ENCODE measurements at regions of chr12 and their contacts with region 1.

Region 1: DNA sequence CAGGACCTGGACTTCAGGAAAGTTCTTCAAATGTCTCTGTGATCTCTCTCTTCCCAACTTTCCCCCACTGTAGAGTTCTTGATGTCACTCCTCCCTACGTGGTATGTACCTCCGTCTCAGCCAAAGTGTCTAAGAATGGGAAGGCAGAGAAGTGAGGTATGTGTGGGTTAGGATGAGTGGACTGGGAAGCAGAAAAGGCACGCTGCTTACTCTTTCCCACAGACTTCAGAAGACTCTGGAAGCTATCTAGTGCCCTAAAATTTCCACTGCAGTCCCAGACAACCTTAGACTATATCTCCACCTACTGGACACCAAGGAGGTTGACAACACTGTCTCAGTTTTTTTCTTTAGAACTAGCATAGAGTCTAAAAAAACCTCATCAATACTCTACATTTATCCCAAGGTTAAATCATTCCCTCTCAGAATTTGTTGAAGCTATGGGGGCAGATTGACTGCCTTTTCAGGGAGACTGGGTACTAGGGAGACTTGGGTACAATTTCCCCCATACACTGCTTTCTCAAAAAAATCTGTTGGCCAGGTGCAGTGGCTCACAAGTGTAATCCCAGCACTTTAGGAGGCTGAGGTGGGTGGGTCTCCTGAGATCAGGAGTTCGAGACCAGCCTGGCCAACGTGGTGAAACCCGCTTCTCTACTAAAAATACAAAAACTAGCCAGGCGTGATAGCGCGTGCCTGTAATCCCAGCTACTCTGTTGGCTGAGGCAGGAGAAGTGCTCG is 20.6 kb upstream of the ITGA5 start:
- DNase-seq: no peak
- ATAC-seq: peak; percentile 72
- H3K4me3 ChIP-seq: no peak overlapping the region
- H3K27ac ChIP-seq: no peak overlapping the region
- H3K4me1 ChIP-seq: 0 out of 2 replicates have a peak, but pooled peaks cover 7% of the 10 kb centered on the region
- H3K27me3 ChIP-seq: no peaks in the 10 kb centered on the region; a peak in 1 of 4 replicates
- CTCF ChIP-seq: peak; percentile 76 to 85 (median 77)
- EP300 ChIP-seq: no peak
- POLR2A ChIP-seq: no peak
- RAD21 ChIP-seq: peak; percentile 92

Region 2: DNA sequence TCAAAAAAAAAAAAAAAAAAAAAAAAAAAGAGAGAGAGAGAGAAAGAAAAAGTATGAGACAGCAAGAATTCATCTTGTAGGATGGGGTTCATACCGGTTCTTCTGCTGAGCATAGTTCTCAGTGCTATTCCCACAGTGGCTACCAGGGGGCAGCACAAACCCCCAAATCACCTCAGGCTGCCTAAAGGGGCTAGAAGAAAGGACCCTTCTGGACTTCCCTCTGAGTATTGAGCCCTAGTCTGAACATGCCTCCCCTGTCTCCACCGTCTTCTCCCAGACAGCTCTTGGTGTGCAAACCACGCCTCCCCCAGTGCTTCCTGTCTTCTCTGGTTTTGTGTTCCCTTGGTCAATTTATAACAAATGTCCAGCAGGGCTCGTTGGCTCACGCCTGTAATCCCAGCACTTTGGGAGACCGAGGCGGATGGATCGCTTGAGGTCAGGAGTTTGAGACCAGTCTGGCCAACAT is 219.6 kb before region 1 on chr12:
- CTCF ChIA-PET with region 1: interaction called, 10 read pairs
- POLR2A ChIA-PET with region 1: no interaction called
- RAD21 ChIA-PET with region 1: no interaction called
- SMC1A ChIA-PET with region 1: interaction called, 3 read pairs
- in situ Hi-C with region 1: no loop called
- intact Hi-C with region 1: no loop called
- DNase-seq: no peak
- ATAC-seq: peak; percentile 58
- H3K4me3 ChIP-seq: no peak overlapping the region
- H3K27ac ChIP-seq: no peak overlapping the region
- H3K4me1 ChIP-seq: peaks cover 30% of the 10 kb centered on the region
- H3K27me3 ChIP-seq: peaks cover 0 to 1% of the 10 kb centered on the region in 2 experiments; a peak in 1 of 4 replicates
- CTCF ChIP-seq: peak; percentile 84 to 90 (median 90)
- EP300 ChIP-seq: no peak
- POLR2A ChIP-seq: no peak
- RAD21 ChIP-seq: peak; percentile 87

Region 3: DNA sequence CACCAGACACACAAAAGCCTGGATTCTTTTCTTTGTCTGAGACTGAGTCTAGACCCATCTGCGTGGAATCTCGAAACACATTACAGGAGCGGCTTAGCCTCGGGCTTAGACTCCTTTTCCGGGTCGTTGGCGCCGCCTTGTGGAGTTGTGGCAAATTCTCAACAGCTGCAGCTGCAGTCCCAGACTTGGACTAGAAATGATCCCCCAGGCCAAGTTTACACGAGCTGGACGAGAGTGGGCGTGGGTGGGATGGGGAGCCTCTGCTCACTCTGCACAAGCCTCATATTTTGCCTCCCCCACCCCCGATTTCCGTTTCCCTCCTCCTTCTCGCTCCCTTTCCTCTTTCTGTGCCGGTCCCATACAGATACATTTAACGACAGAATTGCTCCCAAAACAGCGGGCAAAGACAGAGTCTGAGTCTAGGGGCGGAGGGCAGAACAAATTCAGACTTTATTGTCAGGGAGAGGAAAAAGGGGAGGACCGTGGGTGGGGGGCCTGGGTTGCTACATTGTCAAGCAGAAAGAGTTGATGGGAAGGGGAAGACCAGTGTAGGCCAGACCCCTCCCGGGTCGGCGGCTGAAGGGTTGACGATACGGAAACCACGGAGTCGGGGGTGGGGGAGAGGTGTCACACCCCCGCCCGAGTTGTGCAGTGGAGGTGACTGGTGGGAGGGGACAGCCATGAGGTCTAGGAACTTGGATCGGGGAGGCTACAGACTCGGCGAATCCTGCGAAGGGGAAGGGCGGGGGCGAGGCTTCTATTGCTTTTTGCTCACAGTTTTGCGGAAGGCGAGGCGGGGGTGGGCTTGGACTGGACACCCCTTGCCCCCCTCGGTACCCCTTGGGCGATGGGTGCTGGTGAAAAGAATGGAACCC is 70.7 kb before region 1 on chr12:
- CTCF ChIA-PET with region 1: interaction called, 13 read pairs
- POLR2A ChIA-PET with region 1: no interaction called
- RAD21 ChIA-PET with region 1: interaction called, 3 read pairs
- SMC1A ChIA-PET with region 1: no interaction called
- in situ Hi-C with region 1: no loop called
- intact Hi-C with region 1: no loop called
- DNase-seq: no peak
- ATAC-seq: peak; percentile 92
- H3K4me3 ChIP-seq: no peak overlapping the region
- H3K27ac ChIP-seq: no peak overlapping the region
- H3K4me1 ChIP-seq: peaks cover 24% of the 10 kb centered on the region
- H3K27me3 ChIP-seq: no peaks in the 10 kb centered on the region
- CTCF ChIP-seq: peak; percentile 91 to 99 (median 98); a peak in 5 of 6 replicates
- EP300 ChIP-seq: no peak
- POLR2A ChIP-seq: no peak
- RAD21 ChIP-seq: peak; percentile 93

Region 4: DNA sequence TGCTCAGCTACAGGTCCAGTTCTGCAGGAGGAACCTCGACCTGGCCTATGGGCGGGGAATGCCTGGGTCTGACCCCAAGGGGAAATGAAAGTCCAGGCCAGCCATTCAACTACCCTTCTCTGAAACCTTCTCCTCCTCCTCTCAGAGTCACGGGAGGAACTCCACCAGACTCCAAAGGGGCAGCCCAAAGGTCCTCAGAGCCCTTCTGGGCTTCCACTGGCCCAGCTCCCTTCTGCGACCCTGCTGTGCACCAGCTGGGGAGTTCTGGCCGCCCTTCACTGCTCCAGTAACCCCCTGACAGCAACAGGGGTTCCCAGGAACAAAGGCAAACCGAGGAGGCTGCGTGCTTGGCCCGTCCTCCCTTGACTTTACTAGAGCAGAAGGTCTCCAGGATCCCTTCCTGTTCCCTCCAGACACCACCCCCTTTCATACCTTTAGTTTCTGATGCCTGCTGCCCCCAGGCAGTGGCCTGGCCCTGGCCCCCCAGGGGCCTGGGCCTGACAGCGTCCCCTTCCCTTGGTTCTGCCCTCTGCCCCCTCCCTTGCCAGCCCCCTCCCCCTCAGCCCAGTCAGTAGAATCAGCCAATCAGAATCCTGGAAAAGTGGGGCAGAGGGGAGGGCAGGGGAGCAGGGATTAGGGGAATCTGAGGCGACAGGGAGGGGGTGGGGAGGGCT is 54.3 kb before region 1 on chr12:
- CTCF ChIA-PET with region 1: interaction called, 43 read pairs
- POLR2A ChIA-PET with region 1: interaction called, 7 read pairs
- RAD21 ChIA-PET with region 1: interaction called, 9 read pairs
- SMC1A ChIA-PET with region 1: interaction called, 9 read pairs
- in situ Hi-C with region 1: no loop called
- intact Hi-C with region 1: no loop called
- DNase-seq: no peak
- ATAC-seq: peak; percentile 86
- H3K4me3 ChIP-seq: peak overlapping the region; percentile 45; the same call in 1 of the 2 replicates
- H3K27ac ChIP-seq: peak overlapping the region; percentile 71
- H3K4me1 ChIP-seq: peaks cover 14% of the 10 kb centered on the region
- H3K27me3 ChIP-seq: no peaks in the 10 kb centered on the region
- CTCF ChIP-seq: no peak
- EP300 ChIP-seq: 0 out of 4 replicates have a peak, but pooled peaks of 1 of the 2 experiments have one; percentile 12
- POLR2A ChIP-seq: no peak
- RAD21 ChIP-seq: no peak

Region 5: DNA sequence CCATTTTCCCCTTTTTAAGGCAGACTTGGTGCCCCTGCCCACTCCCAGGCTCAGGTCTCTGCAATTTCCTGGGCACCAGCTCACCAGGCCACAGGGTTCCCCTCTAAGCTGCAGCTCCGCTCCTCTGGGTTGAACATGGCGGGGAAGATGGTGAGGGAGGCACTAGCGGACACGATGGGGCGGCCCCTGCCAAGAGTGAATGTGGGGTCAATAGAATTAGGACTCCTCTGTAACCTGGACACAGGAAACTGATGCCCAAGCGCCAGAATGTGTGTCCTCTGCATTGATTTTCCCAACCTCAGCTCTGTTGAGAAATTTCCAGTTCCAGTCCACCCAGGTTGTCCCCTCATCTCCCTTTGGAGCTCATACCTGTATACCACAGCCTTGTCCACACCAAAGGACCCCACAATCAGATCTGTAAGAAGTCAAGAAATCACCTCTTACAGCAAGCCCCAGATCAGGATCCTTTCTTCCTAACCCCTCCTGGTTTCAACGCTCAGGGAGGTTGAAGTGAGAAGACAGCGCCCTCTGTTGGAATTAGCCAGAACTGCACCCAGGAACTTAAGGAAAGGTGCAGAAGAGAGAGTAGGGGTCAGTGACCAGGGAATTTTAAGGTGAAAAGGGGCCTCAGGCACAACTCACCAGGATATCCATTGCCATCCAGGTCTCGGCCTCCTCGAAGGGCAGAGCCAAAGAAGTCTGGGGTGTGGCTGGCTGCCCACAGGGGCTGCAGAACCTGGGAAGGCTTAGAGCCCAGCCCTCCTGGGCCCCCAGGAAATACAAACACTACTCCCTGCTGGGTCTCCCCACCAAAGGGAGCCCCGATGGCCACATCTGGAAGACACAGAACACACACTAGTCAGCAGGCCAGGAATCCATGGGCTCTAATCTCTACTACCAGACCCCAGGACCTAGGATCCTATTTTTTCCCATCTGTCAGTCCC is 35.4 kb before region 1 on chr12:
- CTCF ChIA-PET with region 1: interaction called, 1,071 read pairs
- POLR2A ChIA-PET with region 1: interaction called, 43 read pairs
- RAD21 ChIA-PET with region 1: interaction called, 296 read pairs
- SMC1A ChIA-PET with region 1: interaction called, 469 read pairs
- in situ Hi-C with region 1: loop called (anchors 5 kb)
- intact Hi-C with region 1: loop called (anchors 1 kb)
- DNase-seq: no peak
- ATAC-seq: peak; percentile 67
- H3K4me3 ChIP-seq: no peak overlapping the region
- H3K27ac ChIP-seq: no peak overlapping the region
- H3K4me1 ChIP-seq: no peaks in the 10 kb centered on the region
- H3K27me3 ChIP-seq: no peaks in the 10 kb centered on the region; a peak in 1 of 4 replicates
- CTCF ChIP-seq: peak; percentile 77 to 99 (median 94)
- EP300 ChIP-seq: no peak
- POLR2A ChIP-seq: no peak
- RAD21 ChIP-seq: peak; percentile 44

Region 6: DNA sequence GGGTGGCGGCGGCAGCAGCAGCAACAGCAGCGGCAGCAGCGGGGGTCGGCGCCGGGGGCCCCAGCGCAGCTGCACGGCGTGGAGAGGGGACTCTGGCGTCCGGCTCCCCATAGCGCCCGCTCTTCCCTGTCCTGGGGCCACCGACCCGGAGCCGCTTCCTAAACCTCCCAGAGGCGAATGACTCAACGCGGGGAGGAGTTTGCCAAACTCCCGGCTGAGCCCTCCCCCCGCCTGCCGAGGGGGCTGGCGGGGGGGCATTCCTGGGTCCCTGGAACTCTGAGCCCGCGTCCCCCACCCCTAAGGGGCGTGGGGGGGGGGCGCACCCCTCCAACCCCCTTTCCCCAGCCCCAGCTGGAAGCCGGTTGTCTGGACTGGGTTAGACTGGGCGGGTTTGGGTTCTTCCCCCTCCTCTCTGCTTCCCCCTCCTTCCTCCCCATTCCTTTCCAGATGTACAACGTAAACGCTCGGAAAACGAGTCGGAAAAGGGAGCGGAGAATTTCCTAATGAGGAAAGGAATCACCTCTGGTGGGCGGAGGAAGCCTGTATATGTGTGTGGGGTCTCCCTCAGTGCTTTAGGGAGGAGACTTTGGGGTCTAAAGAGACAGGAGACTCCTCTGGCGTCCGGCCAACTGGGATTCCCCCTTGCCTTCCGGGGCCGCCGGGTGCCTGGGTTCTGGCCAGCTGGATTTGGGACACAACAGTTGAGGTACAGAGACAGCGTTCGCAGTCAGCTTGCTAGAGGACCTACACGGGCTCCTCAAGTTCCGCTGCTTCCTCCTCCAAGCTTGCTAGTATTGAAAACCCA is 20.4 kb before region 1 on chr12 and contains the start of gene ITGA5:
- CTCF ChIA-PET with region 1: interaction called, 150 read pairs
- POLR2A ChIA-PET with region 1: interaction called, 41 read pairs
- RAD21 ChIA-PET with region 1: interaction called, 34 read pairs
- SMC1A ChIA-PET with region 1: interaction called, 69 read pairs
- in situ Hi-C with region 1: no loop called
- intact Hi-C with region 1: no loop called
- DNase-seq: no peak
- ATAC-seq: peak; percentile 16
- H3K4me3 ChIP-seq: peak within 1 kb of the TSS; percentile 32; the same call in 1 of the 2 replicates
- H3K27ac ChIP-seq: no peak within 1 kb of the TSS
- H3K4me1 ChIP-seq: no peaks in the 10 kb centered on the region
- H3K27me3 ChIP-seq: peaks cover 4 to 16% of the 10 kb centered on the region in 2 experiments
- CTCF ChIP-seq: no peak
- EP300 ChIP-seq: no peak
- POLR2A ChIP-seq: no peak
- RAD21 ChIP-seq: no peak
- polyA plus RNA-seq, gene ITGA5: 0.15 to 0.31 TPM

Region 7: GRCh38 chr12:54497883-54498282 is 58.2 kb after region 1 on chr12:
- CTCF ChIA-PET with region 1: interaction called, 16 read pairs
- POLR2A ChIA-PET with region 1: interaction called, 3 read pairs
- RAD21 ChIA-PET with region 1: interaction called, 4 read pairs
- SMC1A ChIA-PET with region 1: interaction called, 17 read pairs
- in situ Hi-C with region 1: no loop called
- intact Hi-C with region 1: no loop called
- DNase-seq: no peak
- ATAC-seq: peak; percentile 3
- H3K4me3 ChIP-seq: peak overlapping the region; percentile 82
- H3K27ac ChIP-seq: peak overlapping the region; percentile 91
- H3K4me1 ChIP-seq: peaks cover 3% of the 10 kb centered on the region; the same call in 1 of the 2 replicates
- H3K27me3 ChIP-seq: no peaks in the 10 kb centered on the region
- CTCF ChIP-seq: no peak
- EP300 ChIP-seq: no peak
- POLR2A ChIP-seq: no peak
- RAD21 ChIP-seq: no peak